ENCODE measurements at regions of chr20 and their contacts with region 1.

Region 1: DNA sequence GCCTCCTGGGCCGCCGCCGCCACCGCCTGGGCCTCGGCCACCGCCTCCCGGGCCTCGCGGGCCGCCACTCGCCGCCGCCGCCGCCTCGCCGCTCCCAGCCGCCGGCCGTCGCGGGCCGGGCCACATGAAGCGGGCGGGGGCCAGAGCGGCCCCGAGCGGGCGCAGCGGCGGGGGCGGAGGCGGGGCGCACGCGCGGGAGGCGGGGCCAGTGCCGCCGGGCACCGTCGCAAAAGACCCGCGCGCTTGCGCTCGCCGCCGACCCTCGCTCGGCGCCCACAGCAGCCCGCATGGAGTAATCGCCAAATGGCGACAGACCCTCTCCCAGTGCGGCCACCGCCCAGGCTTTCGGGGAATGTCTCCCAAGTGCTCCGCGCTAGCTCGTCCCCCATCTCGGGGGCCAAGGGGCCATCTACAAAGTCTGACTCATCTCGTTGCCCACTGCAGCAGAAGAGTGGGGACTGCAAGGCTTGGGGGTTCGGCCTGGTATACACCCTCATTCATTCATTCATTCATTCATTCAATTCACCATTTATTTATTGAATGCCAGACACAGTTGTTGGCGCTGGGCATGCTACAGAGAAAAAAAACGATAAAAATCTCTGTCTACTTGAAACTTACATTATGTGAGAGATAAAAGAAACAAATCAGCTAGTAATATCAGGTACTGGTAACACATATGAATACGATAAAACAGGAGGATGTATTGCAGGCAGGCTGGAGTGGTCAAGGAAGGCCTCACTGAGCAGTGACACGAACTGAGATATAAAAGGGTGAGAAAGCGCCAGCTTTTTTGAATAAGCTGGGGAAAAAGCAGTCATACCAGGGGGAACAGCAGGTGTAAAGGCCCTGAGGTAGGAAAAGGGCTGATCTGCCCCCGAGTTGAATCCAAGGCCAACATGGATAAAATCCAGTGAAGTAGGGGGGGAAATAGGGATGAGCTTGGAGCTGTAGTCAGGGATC is at the start of gene B4GALT5:
- DNase-seq: peak; percentile 93
- H3K4me3 ChIP-seq: peak within 1 kb of the TSS; percentile 87 to 95 (median 92)
- H3K27ac ChIP-seq: peak within 1 kb of the TSS; percentile 89 to 99 (median 94)
- H3K4me1 ChIP-seq: peaks cover 25 to 67% (median 45%) of the 10 kb centered on the region in 6 donors
- H3K27me3 ChIP-seq: no peaks in the 10 kb centered on the region
- CTCF ChIP-seq: no peak
- POLR2A ChIP-seq: peak in 1 of 3 donors; percentile 48
- total RNA-seq, gene B4GALT5: 41.1 to 79.0 (median 63.4) TPM

Region 2: DNA sequence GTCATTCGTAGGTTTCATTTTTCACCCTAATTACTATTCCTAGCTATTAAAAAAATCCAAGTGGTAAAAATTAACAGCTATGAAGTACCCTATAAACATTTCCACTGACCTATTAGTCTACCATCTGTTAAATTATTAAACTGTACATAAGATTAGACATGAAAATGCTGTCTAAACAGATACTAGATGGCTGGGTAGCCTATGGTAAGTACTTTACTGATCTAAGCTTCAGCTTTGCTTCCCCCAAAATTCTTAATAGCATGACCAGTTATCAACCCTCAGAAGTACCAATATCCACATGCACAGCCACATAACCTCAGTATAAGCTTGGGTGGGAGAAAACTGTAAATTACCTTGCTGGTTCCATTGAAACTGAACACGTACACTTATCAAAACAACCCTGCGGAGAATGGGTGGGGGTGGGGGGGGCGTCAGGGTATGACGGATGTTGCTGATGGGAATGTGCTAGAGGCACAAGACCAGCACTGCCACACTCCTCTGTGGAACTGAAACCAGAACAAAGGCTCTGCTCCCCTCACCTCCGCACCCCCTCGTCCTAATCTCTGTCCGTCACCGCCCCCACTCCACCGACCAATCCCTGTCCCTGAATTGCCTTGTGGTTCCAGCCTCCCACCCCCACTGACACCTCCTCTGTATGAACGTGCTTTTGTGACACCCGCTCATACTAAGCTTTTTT is 45.7 kb before region 1 on chr20:
- intact Hi-C with region 1: loop called (anchors 10 kb)
- DNase-seq: peak; percentile 89
- H3K4me3 ChIP-seq: peak overlapping the region in 1 of 8 donors; percentile 59
- H3K27ac ChIP-seq: peak overlapping the region in 5 of 8 donors; percentile 57 to 77 (median 67)
- H3K4me1 ChIP-seq: peaks cover 25 to 97% (median 72%) of the 10 kb centered on the region in 6 donors
- H3K27me3 ChIP-seq: no peaks in the 10 kb centered on the region
- CTCF ChIP-seq: no peak
- POLR2A ChIP-seq: no peak

Region 3: DNA sequence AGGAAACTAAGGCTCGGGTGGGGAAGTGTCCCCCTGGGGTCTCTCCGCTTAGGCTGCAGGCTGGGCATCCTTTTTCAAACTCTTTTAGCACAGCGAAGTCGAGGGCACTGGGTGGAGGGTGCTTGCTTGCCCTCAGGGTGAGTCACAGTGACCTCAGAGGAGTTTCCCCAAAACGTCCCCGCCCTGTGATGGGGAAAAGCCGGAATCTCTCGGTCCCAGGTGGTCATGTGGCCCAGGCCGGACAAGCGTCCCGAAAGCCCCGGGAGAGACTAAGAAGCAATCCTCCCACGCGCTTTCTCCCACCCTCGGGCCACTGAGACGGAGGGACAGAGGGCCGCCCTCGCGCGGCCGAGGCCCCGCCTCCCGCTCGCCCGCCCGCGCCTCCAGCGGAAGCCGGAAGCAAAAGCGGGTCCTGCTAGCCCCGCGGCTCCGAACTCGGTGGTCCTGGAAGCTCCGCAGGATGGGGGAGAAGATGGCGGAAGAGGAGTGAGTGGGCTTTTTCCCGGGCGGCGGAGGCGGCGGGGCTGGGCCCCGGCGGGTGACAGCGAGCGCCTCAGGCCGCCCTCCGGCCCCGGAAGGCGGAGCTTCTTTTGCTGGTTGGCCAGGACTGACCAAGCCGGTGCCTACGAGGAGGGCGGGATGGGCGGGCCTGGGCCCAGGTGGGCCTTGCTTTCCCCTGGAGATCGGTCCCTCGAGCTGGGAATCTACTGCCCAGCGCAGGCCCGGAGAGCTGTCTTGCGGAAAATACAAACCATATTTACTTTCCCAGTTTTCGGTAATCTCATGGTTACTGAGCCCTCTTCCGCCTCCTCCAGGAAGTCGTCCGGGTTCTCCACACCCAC is 98.7 kb after region 1 on chr20 and contains the start of gene SLC9A8:
- intact Hi-C with region 1: loop called (anchors 5 kb)
- DNase-seq: peak; percentile 96
- H3K4me3 ChIP-seq: peak within 1 kb of the TSS; percentile 72 to 93 (median 84)
- H3K27ac ChIP-seq: peak within 1 kb of the TSS; percentile 89 to 100 (median 98)
- H3K4me1 ChIP-seq: peaks cover 12 to 71% (median 35%) of the 10 kb centered on the region in 6 donors
- H3K27me3 ChIP-seq: no peaks in the 10 kb centered on the region
- CTCF ChIP-seq: peak; percentile 12 to 75 (median 55)
- POLR2A ChIP-seq: peak in 2 of 3 donors; percentile 22 to 48
- total RNA-seq, gene SLC9A8: 15.9 to 35.3 (median 28.6) TPM